Mammary epithelial cell (primary cell): ENCODE measurements at regions of chr6 and their contacts with region 1.

Region 1: DNA sequence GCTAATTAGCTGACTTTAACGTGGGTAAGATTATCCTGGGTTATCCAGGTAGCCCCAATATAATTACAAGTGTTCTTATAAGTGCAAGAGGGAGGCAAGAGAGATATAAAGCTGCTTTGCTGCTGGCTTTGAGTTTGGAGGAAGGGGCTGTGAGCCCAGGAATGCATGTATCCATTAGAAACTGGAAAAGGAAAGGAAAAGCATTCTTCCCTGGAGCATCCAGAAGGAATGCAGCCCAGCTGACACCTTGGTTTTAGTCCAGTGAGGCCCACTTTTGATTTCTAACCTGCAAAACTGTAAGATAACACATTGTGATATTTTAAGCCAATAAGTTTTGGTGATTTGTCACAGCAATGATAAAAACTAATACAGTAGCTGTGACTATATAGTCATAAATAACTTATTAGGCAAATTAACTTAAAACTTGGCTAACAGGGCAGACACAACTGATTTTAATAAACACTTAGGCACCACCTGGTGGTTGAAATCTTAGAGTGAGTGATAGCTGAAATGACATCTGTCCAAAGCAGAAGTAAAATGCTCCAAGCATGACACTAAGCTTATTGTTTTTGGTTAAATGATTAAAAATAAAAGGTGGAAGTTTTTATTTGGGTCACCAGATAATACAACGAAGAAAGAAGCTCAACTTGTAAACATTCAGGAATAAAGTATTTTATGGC is 35.6 kb downstream of the ADGRF4 start:
- DNase-seq: peak; percentile 47
- H3K4me3 ChIP-seq: no peak overlapping the region
- H3K27ac ChIP-seq: no peak overlapping the region
- H3K4me1 ChIP-seq: peaks cover 29% of the 10 kb centered on the region
- H3K27me3 ChIP-seq: no peaks in the 10 kb centered on the region
- CTCF ChIP-seq: peak; percentile 49 to 64

Region 2: DNA sequence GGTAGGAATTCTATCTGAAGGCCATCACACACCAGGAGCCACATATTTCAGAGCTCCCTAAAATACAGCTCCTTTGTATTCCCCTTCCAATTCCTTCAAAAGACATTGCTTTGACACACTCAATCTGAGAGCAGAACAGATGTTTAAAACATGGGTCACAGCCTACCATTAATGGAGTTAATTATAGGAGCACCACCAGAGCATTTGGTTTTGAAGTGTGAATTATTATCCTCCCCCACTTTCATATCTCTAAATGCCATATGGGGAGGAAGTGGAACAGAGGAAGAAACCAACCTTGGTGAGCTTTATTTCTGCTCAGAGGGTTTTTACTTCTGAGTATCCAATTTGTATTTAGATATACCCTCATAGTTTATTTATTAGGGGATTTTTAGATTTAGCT is 373.6 kb before region 1 on chr6:
- CTCF ChIA-PET with region 1: no interaction called
- dilution Hi-C with region 1: no loop called
- in situ Hi-C with region 1: no loop called
- intact Hi-C with region 1: no loop called
- DNase-seq: no peak
- H3K4me3 ChIP-seq: no peak overlapping the region
- H3K27ac ChIP-seq: no peak overlapping the region
- H3K4me1 ChIP-seq: no peaks in the 10 kb centered on the region
- H3K27me3 ChIP-seq: peaks cover 4% of the 10 kb centered on the region
- CTCF ChIP-seq: no peak

Region 3: DNA sequence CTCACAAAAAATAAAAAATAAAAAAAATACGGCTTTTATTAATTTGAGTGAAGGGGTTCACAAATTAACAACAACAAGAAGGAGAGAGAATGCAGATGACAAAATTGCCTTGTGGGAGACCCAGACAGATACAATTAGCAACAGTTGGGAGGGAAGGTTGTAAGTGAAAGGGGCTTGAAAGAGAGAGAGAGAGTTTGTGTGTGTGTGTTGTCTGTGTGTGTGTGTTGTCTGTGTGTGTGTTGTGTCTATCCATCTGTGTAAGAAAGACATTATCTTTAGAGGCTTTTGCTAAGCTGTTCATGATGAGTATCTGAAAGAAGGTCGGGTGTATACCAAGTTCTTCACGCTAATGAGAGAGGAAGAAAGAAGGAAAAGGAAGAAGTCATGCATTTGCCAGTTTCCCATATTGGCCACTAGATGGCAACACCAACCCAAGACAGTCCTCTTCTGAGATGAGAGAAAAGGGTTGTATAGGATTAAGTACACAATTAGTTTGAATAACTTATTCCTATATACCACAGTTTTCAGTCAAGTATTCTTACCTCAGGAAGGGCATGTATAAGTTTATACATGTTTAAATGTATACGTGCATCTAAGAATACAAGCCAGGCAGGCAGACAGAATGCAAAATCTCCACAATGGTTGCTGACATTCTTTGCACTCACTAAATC is 320.1 kb before region 1 on chr6:
- CTCF ChIA-PET with region 1: no interaction called
- dilution Hi-C with region 1: no loop called
- in situ Hi-C with region 1: loop called in 1 of 2 experiments (anchors 25 kb)
- intact Hi-C with region 1: loop called (anchors 1 kb)
- DNase-seq: peak; percentile 67
- H3K4me3 ChIP-seq: peak overlapping the region; percentile 43 to 45 (median 45)
- H3K27ac ChIP-seq: peak overlapping the region; percentile 61
- H3K4me1 ChIP-seq: peaks cover 5% of the 10 kb centered on the region
- H3K27me3 ChIP-seq: no peaks in the 10 kb centered on the region
- CTCF ChIP-seq: peak; percentile 88 to 96

Region 4: GRCh38 chr6:47651505-47651944 is 82.5 kb before region 1 on chr6:
- CTCF ChIA-PET with region 1: interaction called, 8 read pairs
- dilution Hi-C with region 1: no loop called
- in situ Hi-C with region 1: loop called in 1 of 2 experiments (anchors 25 kb)
- intact Hi-C with region 1: loop called (anchors 1 kb)
- DNase-seq: peak; percentile 74
- H3K4me3 ChIP-seq: no peak overlapping the region
- H3K27ac ChIP-seq: peak overlapping the region; percentile 56
- H3K4me1 ChIP-seq: peaks cover 32% of the 10 kb centered on the region
- H3K27me3 ChIP-seq: no peaks in the 10 kb centered on the region
- CTCF ChIP-seq: no peak

Region 5: GRCh38 chr6:47690209-47690608 is 43.8 kb before region 1 on chr6:
- CTCF ChIA-PET with region 1: interaction called, 9 read pairs
- dilution Hi-C with region 1: no loop called
- in situ Hi-C with region 1: no loop called
- intact Hi-C with region 1: loop called (anchors 1 kb)
- DNase-seq: no peak
- H3K4me3 ChIP-seq: no peak overlapping the region
- H3K27ac ChIP-seq: no peak overlapping the region
- H3K4me1 ChIP-seq: no peaks in the 10 kb centered on the region
- H3K27me3 ChIP-seq: no peaks in the 10 kb centered on the region
- CTCF ChIP-seq: peak in 1 of 2 donors; percentile 46

Region 6: DNA sequence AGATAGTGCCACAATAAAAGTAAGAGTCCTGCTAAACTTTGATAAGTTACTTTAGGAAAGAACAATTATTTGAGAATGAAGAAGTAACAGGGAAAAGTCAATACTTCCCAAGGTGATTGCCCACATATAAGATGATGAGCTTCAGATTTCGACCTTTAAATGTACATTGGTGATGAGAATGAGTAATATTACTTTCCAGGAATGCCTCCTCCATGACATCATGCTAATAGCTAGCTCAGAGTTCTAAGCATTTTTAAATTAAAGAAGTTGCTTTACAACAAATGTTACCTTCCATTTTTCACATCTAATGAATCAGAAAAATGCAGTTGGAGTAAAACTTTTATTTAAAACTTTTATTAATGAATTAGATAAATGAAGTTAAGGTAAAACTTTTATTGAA is 25.3 kb after region 1 on chr6:
- CTCF ChIA-PET with region 1: no interaction called
- dilution Hi-C with region 1: no loop called
- in situ Hi-C with region 1: no loop called
- intact Hi-C with region 1: no loop called
- DNase-seq: peak; percentile 28
- H3K4me3 ChIP-seq: no peak overlapping the region
- H3K27ac ChIP-seq: no peak overlapping the region
- H3K4me1 ChIP-seq: no peaks in the 10 kb centered on the region
- H3K27me3 ChIP-seq: no peaks in the 10 kb centered on the region
- CTCF ChIP-seq: no peak

Region 7: GRCh38 chr6:47780510-47781356 is 46.7 kb after region 1 on chr6:
- CTCF ChIA-PET with region 1: interaction called, 3 read pairs
- dilution Hi-C with region 1: no loop called
- in situ Hi-C with region 1: no loop called
- intact Hi-C with region 1: loop called (anchors 2 kb)
- DNase-seq: peak; percentile 73
- H3K4me3 ChIP-seq: no peak overlapping the region
- H3K27ac ChIP-seq: no peak overlapping the region
- H3K4me1 ChIP-seq: peaks cover 9% of the 10 kb centered on the region
- H3K27me3 ChIP-seq: no peaks in the 10 kb centered on the region
- CTCF ChIP-seq: peak; percentile 65 to 69

Region 8: GRCh38 chr6:47859132-47859531 is 125.1 kb after region 1 on chr6:
- CTCF ChIA-PET with region 1: no interaction called
- dilution Hi-C with region 1: no loop called
- in situ Hi-C with region 1: no loop called
- intact Hi-C with region 1: no loop called
- DNase-seq: no peak
- H3K4me3 ChIP-seq: no peak overlapping the region
- H3K27ac ChIP-seq: no peak overlapping the region
- H3K4me1 ChIP-seq: peaks cover 6% of the 10 kb centered on the region
- H3K27me3 ChIP-seq: no peaks in the 10 kb centered on the region
- CTCF ChIP-seq: no peak

Region 9: DNA sequence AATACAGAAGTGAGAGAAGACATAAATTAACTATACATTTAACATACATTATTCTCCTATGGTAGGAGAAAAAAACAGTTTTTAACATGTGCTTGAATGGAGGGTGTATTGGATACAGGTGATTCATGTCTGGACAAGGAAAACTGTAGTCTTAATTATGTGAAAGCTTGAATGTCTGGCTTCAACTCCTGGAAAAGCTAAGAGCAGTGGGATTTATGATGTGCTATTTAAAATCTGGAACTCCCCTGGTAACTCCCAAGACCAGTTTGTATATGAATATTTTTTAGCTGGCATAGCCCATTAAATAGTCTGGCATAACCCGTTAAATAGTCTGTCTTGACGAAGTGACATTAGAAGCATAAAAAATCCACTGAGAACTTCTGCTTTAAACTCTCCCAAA is 786.9 kb after region 1 on chr6:
- CTCF ChIA-PET with region 1: no interaction called
- dilution Hi-C with region 1: no loop called
- in situ Hi-C with region 1: no loop called
- intact Hi-C with region 1: no loop called
- DNase-seq: no peak
- H3K4me3 ChIP-seq: no peak overlapping the region
- H3K27ac ChIP-seq: no peak overlapping the region
- H3K4me1 ChIP-seq: no peaks in the 10 kb centered on the region
- H3K27me3 ChIP-seq: peaks cover 34% of the 10 kb centered on the region
- CTCF ChIP-seq: no peak